Dorsolateral prefrontal cortex (tissue), 120 donors: ENCODE measurements at regions of chr3 and their contacts with region 1.

Region 1: GRCh38 chr3:12796171-12797123 is at the start of gene CAND2:
- DNase-seq: peak in 9 of 10 donors; percentile 47 to 81 (median 70)
- H3K4me3 ChIP-seq: peak within 1 kb of the TSS; percentile 51 to 87 (median 76)
- H3K27ac ChIP-seq: peak within 1 kb of the TSS; percentile 66 to 98 (median 92)
- H3K27me3 ChIP-seq: no peaks in the 10 kb centered on the region
- CTCF ChIP-seq: peak in 22 of 56 donors; percentile 7 to 39 (median 22)
- total RNA-seq, gene CAND2: 12.6 to 41.8 (median 29.3) TPM

Region 2: GRCh38 chr3:12841149-12841970 is 44.9 kb after region 1 on chr3 and contains the start of gene RPL32:
- intact Hi-C with region 1: loop called in 1 of 2 experiments (anchors 5 kb)
- DNase-seq: peak; percentile 83 to 94 (median 87)
- H3K4me3 ChIP-seq: peak within 1 kb of the TSS; percentile 67 to 98 (median 89)
- H3K27ac ChIP-seq: peak within 1 kb of the TSS; percentile 93 to 100 (median 98)
- H3K27me3 ChIP-seq: no peaks in the 10 kb centered on the region
- CTCF ChIP-seq: peak; percentile 65 to 99 (median 89)
- total RNA-seq, gene RPL32: 444 to 772 (median 559) TPM